BJ (cell line): ENCODE measurements at regions of chr9 and their contacts with region 1.

Region 1: GRCh38 chr9:70411930-70412831 is 2.3 kb downstream of the KLF9 start:
- DNase-seq: no peak
- H3K4me3 ChIP-seq: peak overlapping the region; percentile 90
- H3K27me3 ChIP-seq: no peaks in the 10 kb centered on the region
- CTCF ChIP-seq: no peak

Region 2: DNA sequence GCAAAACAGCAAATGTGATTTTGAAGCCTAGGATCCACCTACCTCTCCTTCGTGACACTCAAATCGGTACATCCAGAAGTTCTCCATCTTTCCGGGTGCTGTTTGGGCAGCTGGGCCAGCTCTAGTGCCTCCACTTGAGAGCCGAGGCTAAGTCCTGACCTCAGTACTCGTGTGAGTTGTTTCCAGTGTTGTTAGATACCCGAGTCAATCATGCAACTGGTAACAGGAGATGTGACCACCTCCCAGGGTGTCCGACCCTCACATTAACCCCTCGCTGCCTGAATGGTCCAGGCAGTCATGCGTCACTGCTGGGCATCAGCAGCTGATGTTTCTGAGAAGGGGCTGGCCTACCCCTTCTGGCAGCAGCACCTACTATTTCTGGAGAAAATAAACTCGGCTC is 916.9 kb before region 1 on chr9:
- CTCF ChIA-PET with region 1: no interaction called
- POLR2A ChIA-PET with region 1: no interaction called
- DNase-seq: no peak
- H3K4me3 ChIP-seq: no peak overlapping the region
- H3K27me3 ChIP-seq: no peaks in the 10 kb centered on the region
- CTCF ChIP-seq: no peak

Region 3: GRCh38 chr9:70382046-70382708 is 30.0 kb before region 1 on chr9:
- CTCF ChIA-PET with region 1: no interaction called
- POLR2A ChIA-PET with region 1: no interaction called
- DNase-seq: no peak
- H3K4me3 ChIP-seq: no peak overlapping the region
- H3K27me3 ChIP-seq: no peaks in the 10 kb centered on the region
- CTCF ChIP-seq: no peak

Region 4: DNA sequence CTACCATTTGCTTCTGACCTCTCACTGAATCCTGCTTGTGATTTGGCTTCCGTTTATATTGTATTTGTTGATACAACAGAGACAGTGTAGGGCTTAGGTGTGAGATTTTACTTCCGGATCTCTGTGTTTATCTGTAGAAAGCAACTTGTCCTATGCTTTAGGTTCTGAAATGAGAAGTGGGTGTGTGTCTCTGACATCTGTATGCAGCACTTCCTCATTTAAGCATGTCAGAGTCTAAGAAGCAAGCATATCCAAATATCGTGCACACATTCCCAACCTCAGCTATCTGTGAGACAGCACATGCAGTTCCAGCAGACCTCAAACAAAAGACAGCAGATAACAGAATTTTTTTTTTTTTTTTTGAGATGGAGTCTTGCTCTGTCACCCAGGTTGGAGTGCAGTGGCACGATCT is 14.0 kb before region 1 on chr9:
- CTCF ChIA-PET with region 1: no interaction called
- POLR2A ChIA-PET with region 1: interaction called, 19 read pairs
- DNase-seq: no peak
- H3K4me3 ChIP-seq: no peak overlapping the region
- H3K27me3 ChIP-seq: no peaks in the 10 kb centered on the region
- CTCF ChIP-seq: no peak